A549 (cell line): ENCODE measurements at regions of chr2 and their contacts with region 1.

Region 1: DNA sequence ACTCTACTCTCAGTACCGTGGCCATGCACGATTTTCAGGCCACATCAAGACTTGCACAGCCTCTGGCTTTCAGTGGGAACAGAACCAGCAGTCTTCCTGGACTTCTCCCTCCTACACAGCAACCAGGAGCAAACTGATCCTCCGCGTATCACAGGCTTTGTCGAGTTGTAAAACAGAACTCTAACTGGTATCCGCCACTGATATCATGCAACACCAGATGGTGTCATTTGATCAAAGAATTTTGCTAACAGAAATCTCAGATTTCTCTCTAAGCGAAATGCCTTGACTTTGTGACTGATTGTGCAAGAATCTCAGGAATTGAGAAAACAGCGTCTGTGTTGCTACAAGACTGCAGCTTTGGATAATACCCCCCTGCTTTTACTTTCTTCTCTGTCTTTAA is 85.7 kb downstream of the COPS8 start:
- DNase-seq: peak; percentile 36 to 76
- ATAC-seq: peak; percentile 84 to 90
- H3K4me3 ChIP-seq: no peak overlapping the region
- H3K27ac ChIP-seq: peak overlapping the region; percentile 57 to 83
- H3K4me1 ChIP-seq: peaks cover 12% of the 10 kb centered on the region
- CTCF ChIP-seq: peak; percentile 68
- EP300 ChIP-seq: no peak
- POLR2A ChIP-seq: no peak
- RAD21 ChIP-seq: peak; percentile 89 to 94

Region 2: DNA sequence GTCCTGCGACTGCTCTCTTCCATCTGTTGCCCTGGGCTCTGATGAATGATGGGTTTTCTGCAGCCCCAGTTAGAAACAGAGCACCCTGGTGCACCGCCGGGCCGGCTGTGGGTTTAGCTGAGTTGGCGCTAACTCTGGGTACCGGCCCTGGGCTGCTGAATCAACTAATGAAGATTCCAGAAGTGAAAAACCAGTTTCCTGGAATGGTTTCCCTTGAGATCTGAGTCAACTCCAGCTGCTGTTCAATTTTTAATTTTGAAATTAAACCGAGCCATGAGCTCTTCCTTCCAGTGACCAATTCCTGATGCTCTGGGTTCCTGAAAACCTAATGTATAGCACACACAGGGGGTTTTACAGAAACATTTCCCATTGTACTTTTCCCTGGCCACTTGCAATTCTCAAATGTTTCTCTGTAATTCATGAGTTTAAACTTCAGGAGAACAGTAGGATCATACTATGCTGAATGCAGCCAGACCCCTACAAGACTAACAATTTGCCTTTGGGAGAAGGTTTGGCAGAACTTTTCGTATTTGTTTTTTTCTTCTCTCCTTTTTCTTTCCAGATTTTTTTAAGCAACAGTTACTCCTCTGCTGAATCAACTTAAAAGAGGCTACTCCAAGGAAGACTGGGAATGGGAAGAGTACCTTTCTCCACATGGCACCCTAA is 237.1 kb after region 1 on chr2:
- CTCF ChIA-PET with region 1: interaction called, 32 read pairs
- POLR2A ChIA-PET with region 1: no interaction called
- DNase-seq: no peak
- ATAC-seq: no peak
- H3K4me3 ChIP-seq: no peak overlapping the region
- H3K27ac ChIP-seq: no peak overlapping the region
- H3K4me1 ChIP-seq: 0 out of 3 replicates have a peak, but pooled peaks cover 5% of the 10 kb centered on the region
- CTCF ChIP-seq: no peak
- EP300 ChIP-seq: no peak
- POLR2A ChIP-seq: no peak
- RAD21 ChIP-seq: no peak